Naive thymus-derived CD4-positive, alpha-beta T cell (primary cell): ENCODE measurements at regions of chr11 and their contacts with region 1.

Region 1: GRCh38 chr11:2196970-2197770 is 25.6 kb upstream of the TH start:
- DNase-seq: peak; percentile 29 to 72 (median 62)
- ATAC-seq: peak; percentile 89
- H3K4me3 ChIP-seq: no peak overlapping the region
- H3K4me3 Mint-ChIP-seq: no peak overlapping the region
- H3K27ac ChIP-seq: no peak overlapping the region
- H3K27ac Mint-ChIP-seq: peak overlapping the region in 2 of 9 donors; percentile 46 to 69
- H3K4me1 ChIP-seq: peaks cover 0 to 4% of the 10 kb centered on the region in 2 donors
- H3K4me1 Mint-ChIP-seq: peaks cover 4 to 16% (median 12%) of the 10 kb centered on the region in 7 donors
- H3K27me3 ChIP-seq: no peaks in the 10 kb centered on the region
- H3K27me3 Mint-ChIP-seq: peaks cover 4 to 13% (median 12%) of the 10 kb centered on the region in 5 donors

Region 2: DNA sequence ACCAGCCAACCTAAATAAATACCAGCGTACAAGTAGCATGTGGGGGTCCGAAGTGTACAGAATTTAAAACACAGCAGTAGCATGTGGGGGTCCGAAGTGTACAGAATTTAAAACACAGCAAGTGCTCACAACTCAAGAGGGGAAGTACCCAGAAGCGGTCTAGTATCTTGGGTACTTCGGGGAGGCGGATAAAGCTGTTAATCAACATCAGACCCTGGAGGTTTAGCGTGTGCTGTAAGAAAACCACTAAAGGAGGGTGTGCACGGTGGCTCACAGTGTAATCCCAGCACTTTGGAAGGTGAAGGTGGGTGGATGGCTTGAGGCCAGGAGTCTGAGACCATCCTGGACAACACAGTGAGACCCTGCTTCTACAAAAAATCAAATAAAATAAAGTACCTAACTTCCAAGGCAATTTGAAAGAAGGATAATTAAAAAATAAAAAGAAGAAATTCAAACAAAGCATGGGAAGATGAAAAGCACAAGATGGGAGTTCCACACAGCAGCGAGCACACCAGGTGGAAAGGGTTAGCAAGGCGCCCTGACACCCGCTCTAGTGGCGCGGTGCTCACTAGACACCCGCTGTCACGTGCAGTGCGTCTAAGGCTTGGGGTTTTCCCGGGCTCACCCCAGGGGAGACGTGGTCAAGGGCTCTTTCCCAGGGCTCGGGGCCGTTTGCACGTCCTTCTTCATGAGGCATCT is 675.6 kb before region 1 on chr11:
- CTCF ChIA-PET with region 1: no interaction called
- POLR2A ChIA-PET with region 1: no interaction called
- intact Hi-C with region 1: no loop called
- DNase-seq: no peak
- ATAC-seq: peak; percentile 54
- H3K4me3 ChIP-seq: no peak overlapping the region
- H3K4me3 Mint-ChIP-seq: no peak overlapping the region
- H3K27ac ChIP-seq: no peak overlapping the region
- H3K27ac Mint-ChIP-seq: peak overlapping the region in 1 of 9 donors; percentile 78
- H3K4me1 ChIP-seq: peaks cover 9% of the 10 kb centered on the region in 2 donors
- H3K4me1 Mint-ChIP-seq: peaks cover 3 to 86% (median 69%) of the 10 kb centered on the region in 7 donors
- H3K27me3 ChIP-seq: no peaks in the 10 kb centered on the region
- H3K27me3 Mint-ChIP-seq: no peaks in the 10 kb centered on the region

Region 3: DNA sequence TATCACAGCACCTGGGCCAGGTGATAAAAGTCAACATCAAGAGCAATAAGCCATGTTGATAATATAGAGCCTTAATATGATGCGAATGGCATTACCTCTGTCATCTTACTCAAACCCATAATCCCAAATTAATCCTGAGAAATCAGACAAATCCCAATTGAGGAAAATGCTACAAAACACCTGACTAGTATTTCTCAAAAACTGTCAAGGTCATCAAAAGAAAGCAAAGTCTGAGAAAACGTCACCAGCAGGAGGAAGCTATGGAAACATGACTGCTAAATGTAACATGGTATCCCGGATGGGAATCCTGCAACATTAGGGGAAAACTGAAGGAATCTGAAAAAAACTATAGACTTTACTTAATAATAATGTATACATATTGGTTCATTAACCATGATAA is 43.7 kb after region 1 on chr11:
- CTCF ChIA-PET with region 1: no interaction called
- POLR2A ChIA-PET with region 1: no interaction called
- intact Hi-C with region 1: loop called in 1 of 2 experiments (anchors 5 kb)
- DNase-seq: no peak
- ATAC-seq: no peak
- H3K4me3 ChIP-seq: no peak overlapping the region
- H3K4me3 Mint-ChIP-seq: no peak overlapping the region
- H3K27ac ChIP-seq: no peak overlapping the region
- H3K27ac Mint-ChIP-seq: no peak overlapping the region
- H3K4me1 ChIP-seq: no peaks in the 10 kb centered on the region
- H3K4me1 Mint-ChIP-seq: no peaks in the 10 kb centered on the region
- H3K27me3 ChIP-seq: no peaks in the 10 kb centered on the region
- H3K27me3 Mint-ChIP-seq: peaks cover 0 to 32% (median 0%) of the 10 kb centered on the region in 5 donors